H1 (cell line): ENCODE measurements at regions of chr7 and their contacts with region 1.

Region 1: DNA sequence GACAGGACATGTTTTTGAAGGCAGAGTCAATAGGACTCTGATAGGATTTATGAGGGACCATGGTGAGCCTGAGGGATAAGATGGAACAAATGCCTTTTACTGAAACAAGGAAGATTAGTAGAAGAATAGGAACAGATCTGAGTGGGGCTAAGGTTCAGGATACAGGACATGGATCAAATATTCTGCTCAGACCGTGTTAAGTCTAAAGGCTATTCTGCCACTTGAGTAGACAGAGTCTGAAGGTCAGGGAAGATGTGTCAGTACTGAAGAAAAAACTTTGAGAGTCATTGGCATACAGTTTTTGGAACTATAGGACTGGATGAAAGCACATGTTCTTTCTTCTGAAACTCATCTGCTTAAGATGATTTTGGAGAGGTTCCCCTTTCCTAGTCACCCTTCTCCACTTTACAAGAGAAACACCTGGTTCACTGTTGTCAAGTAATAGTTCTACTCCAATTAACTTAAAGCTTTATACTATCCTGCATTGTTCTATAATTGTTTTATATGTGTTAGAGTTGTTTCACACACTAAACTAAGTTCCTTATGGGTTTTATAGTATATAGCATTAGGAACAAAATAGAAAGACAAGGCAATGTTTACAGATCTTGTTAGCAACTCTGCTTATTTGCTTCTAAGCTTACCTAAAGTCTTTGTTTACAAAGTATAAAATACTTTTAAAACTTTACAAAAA is 43.4 kb downstream of the WASL start:
- DNase-seq: no peak
- H3K4me3 ChIP-seq: no peak overlapping the region
- H3K27ac ChIP-seq: no peak overlapping the region
- H3K4me1 ChIP-seq: no peaks in the 10 kb centered on the region; a peak in 1 of 7 replicates
- H3K27me3 ChIP-seq: no peaks in the 10 kb centered on the region
- CTCF ChIP-seq: no peak
- EP300 ChIP-seq: no peak
- POLR2A ChIP-seq: no peak
- RAD21 ChIP-seq: no peak

Region 2: DNA sequence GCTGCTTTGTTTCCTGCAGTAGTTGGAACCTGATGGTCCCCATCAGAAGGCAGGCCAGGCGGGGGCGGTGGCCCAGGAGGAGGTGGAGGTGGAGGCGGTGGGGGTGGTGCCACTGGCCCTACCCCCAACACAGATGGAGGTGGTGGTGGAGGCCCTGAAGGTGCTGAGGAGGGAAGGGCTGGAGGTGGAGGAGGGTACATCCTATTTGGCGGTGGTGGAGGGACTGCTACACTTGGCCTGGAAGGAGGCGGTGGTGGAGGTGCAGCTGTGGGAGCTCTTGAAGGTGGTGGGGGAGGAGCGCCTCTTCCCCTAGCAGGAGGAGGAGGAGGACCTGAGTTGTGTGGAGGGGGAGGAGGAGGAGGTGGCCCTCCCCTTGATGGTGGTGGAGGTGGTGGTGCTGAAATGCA is 12.9 kb before region 1 on chr7:
- CTCF ChIA-PET with region 1: interaction called, 13 read pairs
- POLR2A ChIA-PET with region 1: no interaction called
- DNase-seq: peak in 1 of 2 experiments; percentile 55
- H3K4me3 ChIP-seq: no peak overlapping the region
- H3K27ac ChIP-seq: no peak overlapping the region
- H3K4me1 ChIP-seq: peaks cover 0 to 3% (median 1%) of the 10 kb centered on the region in 4 experiments; a peak in 3 of 7 replicates
- H3K27me3 ChIP-seq: no peaks in the 10 kb centered on the region
- CTCF ChIP-seq: no peak
- EP300 ChIP-seq: 0 out of 3 replicates have a peak, but pooled peaks of 1 of the 2 experiments have one; percentile 7
- POLR2A ChIP-seq: no peak
- RAD21 ChIP-seq: no peak

Region 3: GRCh38 chr7:123748734-123749536 is 43.6 kb after region 1 on chr7 and contains the start of gene WASL:
- CTCF ChIA-PET with region 1: interaction called, 10 read pairs
- POLR2A ChIA-PET with region 1: interaction called, 7 read pairs
- DNase-seq: peak; percentile 69 to 95
- H3K4me3 ChIP-seq: peak within 1 kb of the TSS; percentile 95 to 99 (median 97)
- H3K27ac ChIP-seq: peak within 1 kb of the TSS; percentile 89
- H3K4me1 ChIP-seq: peaks cover 0 to 18% (median 2%) of the 10 kb centered on the region in 4 experiments; a peak in 3 of 7 replicates
- H3K27me3 ChIP-seq: no peaks in the 10 kb centered on the region
- CTCF ChIP-seq: 0 out of 4 replicates have a peak, but pooled peaks of 1 of the 3 experiments have one; percentile 18
- EP300 ChIP-seq: peak in 1 of 2 experiments; percentile 99; a peak in 2 of 3 replicates
- POLR2A ChIP-seq: peak; percentile 96 to 99
- RAD21 ChIP-seq: no peak
- total RNA-seq, gene WASL: 37.1 and 38.9 TPM in 2 replicates

Region 4: DNA sequence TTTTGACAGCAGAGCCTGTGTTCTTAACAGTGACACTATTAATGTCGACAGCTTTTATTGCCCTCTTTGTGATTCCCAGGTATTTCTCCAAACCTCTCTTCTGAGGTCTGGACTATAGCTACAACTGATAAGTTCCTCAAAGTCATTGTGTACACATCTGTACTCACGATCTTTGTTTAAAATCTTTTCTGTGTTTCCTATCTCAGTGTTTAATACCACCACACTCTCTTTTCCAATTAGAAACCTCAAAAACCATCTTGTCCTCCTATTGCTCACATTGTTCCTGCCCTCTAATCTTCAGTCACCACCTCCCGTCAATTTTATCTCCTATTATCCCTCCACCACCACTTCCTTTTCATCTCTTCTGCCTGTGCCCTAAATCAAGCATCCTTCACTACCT is 56.4 kb after region 1 on chr7:
- CTCF ChIA-PET with region 1: no interaction called
- POLR2A ChIA-PET with region 1: no interaction called
- DNase-seq: no peak
- H3K4me3 ChIP-seq: no peak overlapping the region
- H3K27ac ChIP-seq: no peak overlapping the region
- H3K4me1 ChIP-seq: no peaks in the 10 kb centered on the region; a peak in 1 of 7 replicates
- H3K27me3 ChIP-seq: peaks cover 0 to 1% (median 0%) of the 10 kb centered on the region in 4 experiments; a peak in 1 of 7 replicates
- CTCF ChIP-seq: no peak
- EP300 ChIP-seq: no peak
- POLR2A ChIP-seq: no peak
- RAD21 ChIP-seq: no peak